Esophagus muscularis mucosa (tissue), 4 donors: ENCODE measurements at regions of chr12 and their contacts with region 1.

Region 1: GRCh38 chr12:124906606-124907261 is 7.7 kb downstream of the UBC start:
- DNase-seq: peak; percentile 96
- H3K4me3 ChIP-seq: no peak overlapping the region
- H3K27ac ChIP-seq: peak overlapping the region in 2 of 4 donors; percentile 40 to 64
- H3K4me1 ChIP-seq: peaks cover 36 to 69% (median 59%) of the 10 kb centered on the region in 4 donors
- H3K27me3 ChIP-seq: no peaks in the 10 kb centered on the region
- CTCF ChIP-seq: peak; percentile 96 to 99 (median 98)
- EP300 ChIP-seq: no peak
- POLR2A ChIP-seq: no peak

Region 2: GRCh38 chr12:124940549-124941527 is 34.1 kb after region 1 on chr12:
- intact Hi-C with region 1: loop called (anchors 1 kb)
- DNase-seq: peak; percentile 98
- H3K4me3 ChIP-seq: peak overlapping the region; percentile 53 to 67 (median 56)
- H3K27ac ChIP-seq: peak overlapping the region; percentile 89 to 98 (median 92)
- H3K4me1 ChIP-seq: peaks cover 32 to 40% (median 38%) of the 10 kb centered on the region in 4 donors
- H3K27me3 ChIP-seq: no peaks in the 10 kb centered on the region
- CTCF ChIP-seq: peak; percentile 96 to 98 (median 96)
- EP300 ChIP-seq: no peak
- POLR2A ChIP-seq: no peak

Region 3: DNA sequence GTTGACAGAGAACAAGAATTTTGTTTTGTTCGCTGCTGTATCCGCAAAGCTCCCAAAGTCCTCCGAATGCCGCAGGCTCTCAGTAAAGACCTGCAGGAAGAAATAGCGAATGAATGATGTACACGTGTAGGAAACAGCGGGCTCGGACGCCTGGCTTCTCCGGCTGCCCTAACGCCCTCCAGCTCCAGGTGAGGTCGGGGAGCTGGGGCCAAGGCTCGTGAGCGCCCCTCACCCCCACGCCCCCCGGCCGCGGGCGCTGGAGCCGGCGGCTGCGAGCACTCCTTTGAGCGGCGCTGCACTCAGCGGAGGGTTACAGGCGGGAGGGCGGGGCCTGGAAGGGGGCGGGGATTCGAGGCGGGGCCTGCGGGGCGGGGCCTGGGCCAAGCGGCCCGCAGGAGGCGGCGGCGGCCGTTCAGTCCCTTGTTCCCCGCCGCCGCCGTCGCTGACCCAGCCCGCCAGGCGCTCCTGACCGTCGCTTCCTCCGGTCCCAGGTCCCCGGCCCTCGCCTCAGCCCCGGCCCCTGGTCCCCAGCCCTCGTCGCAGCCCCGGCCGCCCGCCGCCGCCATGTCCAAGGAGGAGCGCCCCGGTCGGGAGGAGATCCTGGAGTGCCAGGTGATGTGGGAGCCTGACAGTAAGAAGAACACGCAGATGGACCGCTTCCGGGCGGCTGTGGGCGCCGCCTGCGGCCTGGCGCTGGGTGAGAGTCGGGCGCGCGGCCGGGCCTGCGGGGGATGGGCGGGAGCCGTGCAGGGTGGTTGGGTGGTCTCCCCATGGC is 158.5 kb after region 1 on chr12 and contains the start of gene AACS:
- intact Hi-C with region 1: no loop called
- DNase-seq: no peak
- H3K4me3 ChIP-seq: peak within 1 kb of the TSS; percentile 75 to 93 (median 87)
- H3K27ac ChIP-seq: peak within 1 kb of the TSS; percentile 78 to 85 (median 80)
- H3K4me1 ChIP-seq: peaks cover 14 to 34% (median 28%) of the 10 kb centered on the region in 4 donors
- H3K27me3 ChIP-seq: no peaks in the 10 kb centered on the region
- CTCF ChIP-seq: no peak
- EP300 ChIP-seq: no peak
- POLR2A ChIP-seq: no peak
- total RNA-seq, gene AACS: 10.2 to 16.7 (median 13.9) TPM